GM12878 (cell line): ENCODE measurements at regions of chr1 and their contacts with region 1.

Region 1: GRCh38 chr1:179298952-179299351 is 5.4 kb downstream of the SOAT1 start:
- DNase-seq: peak; percentile 40
- ATAC-seq: peak; percentile 82
- H3K4me3 ChIP-seq: no peak overlapping the region
- H3K27ac ChIP-seq: peak overlapping the region; percentile 28
- H3K4me1 ChIP-seq: 0 out of 2 replicates have a peak, but pooled peaks cover 3% of the 10 kb centered on the region
- H3K27me3 ChIP-seq: no peaks in the 10 kb centered on the region
- CTCF ChIP-seq: no peak
- EP300 ChIP-seq: no peak
- POLR2A ChIP-seq: no peak
- RAD21 ChIP-seq: no peak

Region 2: DNA sequence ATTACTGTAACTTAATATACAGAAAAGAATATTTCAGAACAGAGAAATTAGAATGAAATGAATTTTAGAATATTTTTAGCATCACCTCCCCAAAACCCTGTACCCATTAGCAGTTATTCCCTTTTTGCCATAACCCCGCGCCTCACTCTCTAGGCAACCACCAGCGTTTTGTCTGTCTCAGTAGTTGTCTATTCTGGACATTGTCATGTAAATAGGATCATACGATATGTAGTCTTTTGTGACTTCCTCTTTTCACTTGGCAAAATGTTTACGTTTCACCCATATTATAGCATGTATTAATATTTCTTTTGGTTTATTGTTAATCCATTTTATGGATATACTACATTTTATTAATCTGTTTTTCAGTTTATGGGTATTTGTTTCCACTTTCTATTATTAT is 19.5 kb after region 1 on chr1:
- CTCF ChIA-PET with region 1: interaction called, 6 read pairs
- POLR2A ChIA-PET with region 1: interaction called, 11 read pairs
- RAD21 ChIA-PET with region 1: interaction called, 7 read pairs
- SMC1A ChIA-PET with region 1: interaction called, 21 read pairs
- in situ Hi-C with region 1: no loop called
- intact Hi-C with region 1: no loop called
- DNase-seq: no peak
- ATAC-seq: peak; percentile 73
- H3K4me3 ChIP-seq: no peak overlapping the region
- H3K27ac ChIP-seq: 0 out of 2 replicates have a peak overlapping the region, but pooled peaks have one; percentile 66
- H3K4me1 ChIP-seq: no peaks in the 10 kb centered on the region; the same call in 1 of the 2 replicates
- H3K27me3 ChIP-seq: no peaks in the 10 kb centered on the region
- CTCF ChIP-seq: no peak
- EP300 ChIP-seq: no peak
- POLR2A ChIP-seq: no peak
- RAD21 ChIP-seq: no peak